AG04449 (cell line): ENCODE measurements at regions of chr15 and their contacts with region 1.

Region 1: DNA sequence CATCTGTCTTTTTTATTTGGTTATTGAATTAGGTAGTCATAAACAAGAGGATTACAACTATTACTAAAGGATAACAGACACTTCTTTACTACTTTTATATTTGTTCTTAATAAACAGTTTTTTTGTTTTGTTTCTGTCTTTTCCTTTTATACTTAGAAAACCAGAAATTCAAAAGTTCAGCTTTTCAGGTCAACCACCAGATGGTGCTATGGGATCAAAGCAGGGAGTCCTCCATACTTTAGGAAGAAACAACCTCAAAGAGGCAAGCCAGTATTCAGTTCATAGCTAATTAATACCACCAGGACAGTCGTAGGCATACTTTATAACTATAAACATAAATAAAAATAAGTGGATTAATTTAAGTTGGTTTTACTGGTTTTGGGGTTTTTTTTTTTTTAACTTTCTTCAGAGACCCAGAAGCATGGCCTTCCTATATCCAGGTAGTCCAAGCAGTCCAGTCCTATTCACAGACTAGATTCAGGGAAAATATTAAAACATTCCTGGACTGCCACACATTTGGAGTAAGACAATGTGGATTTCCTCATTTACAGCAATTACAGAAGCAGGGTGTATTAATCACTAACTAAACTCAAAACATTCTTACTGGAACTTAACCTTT is 16.0 kb upstream of the EID1 start:
- DNase-seq: peak; percentile 44
- H3K4me3 ChIP-seq: no peak overlapping the region
- CTCF ChIP-seq: peak; percentile 53

Region 2: GRCh38 chr15:48898083-48898845 is 36.3 kb after region 1 on chr15:
- CTCF ChIA-PET with region 1: no interaction called
- POLR2A ChIA-PET with region 1: no interaction called
- DNase-seq: no peak
- H3K4me3 ChIP-seq: no peak overlapping the region
- CTCF ChIP-seq: no peak

Region 3: DNA sequence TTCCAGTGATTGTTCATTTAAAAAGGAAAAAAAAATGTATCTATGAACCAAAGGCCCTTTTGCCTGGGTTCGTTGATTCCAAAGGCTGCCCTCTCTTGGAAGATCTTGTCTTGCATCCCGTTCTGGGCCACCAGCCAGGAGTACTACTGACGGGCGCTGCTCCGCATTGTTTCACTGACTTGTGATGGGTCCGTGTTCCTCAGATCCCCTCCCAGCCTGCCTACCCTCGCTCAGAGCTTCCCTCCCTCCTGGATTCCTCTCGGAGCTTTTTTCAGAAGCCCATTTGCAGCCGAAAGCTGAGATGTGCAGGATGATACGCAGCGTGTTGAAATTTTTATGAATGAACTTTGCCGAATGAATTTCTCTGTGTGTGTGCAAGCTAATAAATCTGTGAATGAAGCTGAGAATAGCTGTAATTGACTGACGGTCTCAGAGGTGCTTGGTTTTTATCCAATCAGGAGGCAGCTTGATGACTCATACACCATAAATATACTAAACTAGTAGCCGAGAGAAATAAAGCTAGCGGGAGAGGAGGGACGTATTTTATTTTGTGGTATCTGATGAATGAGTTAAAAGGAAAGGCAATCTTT is 101.7 kb after region 1 on chr15 and contains the start of gene SHC4:
- CTCF ChIA-PET with region 1: interaction called, 166 read pairs
- POLR2A ChIA-PET with region 1: no interaction called
- DNase-seq: no peak
- H3K4me3 ChIP-seq: peak within 1 kb of the TSS; percentile 67
- CTCF ChIP-seq: peak; percentile 36

Region 4: GRCh38 chr15:49015896-49016295 is 154.0 kb after region 1 on chr15:
- CTCF ChIA-PET with region 1: interaction called, 16 read pairs
- POLR2A ChIA-PET with region 1: no interaction called
- DNase-seq: no peak
- H3K4me3 ChIP-seq: no peak overlapping the region
- CTCF ChIP-seq: no peak

Region 5: GRCh38 chr15:49145651-49146609 is 284.0 kb after region 1 on chr15:
- CTCF ChIA-PET with region 1: interaction called, 97 read pairs
- POLR2A ChIA-PET with region 1: interaction called, 3 read pairs
- DNase-seq: no peak
- H3K4me3 ChIP-seq: no peak overlapping the region
- CTCF ChIP-seq: peak; percentile 61

Region 6: GRCh38 chr15:49421991-49422390 is 560.1 kb after region 1 on chr15:
- CTCF ChIA-PET with region 1: interaction called, 28 read pairs
- POLR2A ChIA-PET with region 1: no interaction called
- DNase-seq: no peak
- H3K4me3 ChIP-seq: no peak overlapping the region
- CTCF ChIP-seq: peak; percentile 45